ENCODE measurements at regions of chr13 and their contacts with region 1.

Region 1: DNA sequence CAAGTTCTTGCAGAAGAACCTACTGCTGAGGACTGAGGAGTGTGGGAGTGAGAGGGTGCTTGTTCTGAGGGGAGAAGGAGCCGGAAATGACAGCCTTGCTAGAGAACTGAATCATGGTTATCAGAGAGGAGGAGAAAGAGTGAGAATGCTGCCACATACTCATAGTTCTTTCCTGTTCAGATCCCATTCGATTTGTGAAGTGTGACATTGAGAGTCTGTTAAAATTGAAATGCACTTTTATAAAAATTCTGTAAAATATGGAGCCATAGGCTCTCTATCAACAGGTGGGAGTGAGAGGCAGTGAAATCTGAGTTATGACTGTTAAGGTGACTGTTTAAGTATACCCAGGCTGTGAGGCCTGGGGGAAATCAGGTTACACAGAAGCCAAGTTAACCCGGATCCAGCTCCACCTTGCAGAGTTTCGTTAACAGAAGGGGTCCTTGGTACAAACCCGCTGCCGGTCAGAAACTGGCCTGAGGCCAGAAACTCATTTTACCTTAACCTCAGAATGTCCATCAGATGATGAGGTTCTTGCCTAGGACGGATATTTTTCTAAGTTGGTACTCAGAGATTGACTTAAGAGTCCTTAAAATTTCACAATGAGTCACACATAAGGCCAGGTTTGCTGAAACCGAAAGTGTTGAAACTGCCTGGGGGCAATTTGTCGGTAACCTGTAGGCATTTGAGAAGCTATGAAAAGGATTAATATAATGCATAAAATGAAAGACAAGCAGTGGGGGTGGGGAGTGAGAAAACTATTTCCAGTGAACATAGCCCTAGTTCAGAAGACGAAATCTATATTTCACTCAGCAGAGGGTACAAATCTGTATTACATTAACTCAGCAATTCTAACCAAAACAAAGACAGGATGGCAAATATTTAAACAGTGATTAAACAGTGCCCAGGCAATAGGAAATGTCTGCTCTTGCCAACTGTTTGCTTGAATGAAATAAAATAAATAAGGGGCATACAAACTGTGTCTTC is 350.5 kb downstream of the KCNRG start:
- DNase-seq: peak; percentile 75
- ATAC-seq: peak; percentile 64
- H3K4me3 Mint-ChIP-seq: peak overlapping the region; percentile 13
- H3K27ac Mint-ChIP-seq: peak overlapping the region; percentile 71
- H3K4me1 Mint-ChIP-seq: peaks cover 43% of the 10 kb centered on the region
- H3K27me3 Mint-ChIP-seq: peaks cover 32% of the 10 kb centered on the region

Region 2: DNA sequence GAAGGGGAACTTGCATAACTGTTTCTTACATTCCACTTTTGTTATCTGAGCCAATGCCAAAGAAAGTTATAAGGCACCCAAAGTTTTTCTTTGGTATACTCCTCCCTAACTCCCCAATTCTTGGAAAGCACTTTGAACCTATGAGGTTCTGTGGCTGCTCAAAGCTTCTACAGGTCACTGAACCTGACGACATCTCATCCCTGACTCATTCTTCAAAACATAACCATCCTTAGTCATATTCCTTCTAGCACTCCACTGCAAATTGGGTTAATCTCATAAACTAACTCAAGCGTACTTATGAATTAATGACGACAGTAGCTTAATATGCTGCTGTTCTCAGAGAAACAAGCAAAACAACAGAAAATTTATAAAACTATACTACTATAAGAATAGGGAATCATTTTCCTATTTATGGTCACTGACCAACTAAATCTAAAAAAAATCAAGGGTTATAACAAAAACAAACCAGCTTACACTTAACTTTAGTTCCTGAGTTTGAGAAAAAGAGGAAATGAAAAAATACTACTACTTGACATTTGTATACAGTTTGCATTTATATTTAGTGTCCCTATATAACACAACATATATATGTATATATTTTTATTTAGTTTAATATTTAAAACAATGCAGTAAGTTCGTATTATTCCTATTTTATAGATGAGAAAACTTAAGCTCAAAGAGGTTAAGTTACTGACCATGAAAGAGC is 991.0 kb before region 1 on chr13:
- CTCF ChIA-PET with region 1: no interaction called
- POLR2A ChIA-PET with region 1: no interaction called
- intact Hi-C with region 1: no loop called
- DNase-seq: no peak
- ATAC-seq: no peak
- H3K4me3 Mint-ChIP-seq: no peak overlapping the region
- H3K27ac Mint-ChIP-seq: no peak overlapping the region
- H3K4me1 Mint-ChIP-seq: peaks cover 21% of the 10 kb centered on the region
- H3K27me3 Mint-ChIP-seq: peaks cover 3% of the 10 kb centered on the region

Region 3: DNA sequence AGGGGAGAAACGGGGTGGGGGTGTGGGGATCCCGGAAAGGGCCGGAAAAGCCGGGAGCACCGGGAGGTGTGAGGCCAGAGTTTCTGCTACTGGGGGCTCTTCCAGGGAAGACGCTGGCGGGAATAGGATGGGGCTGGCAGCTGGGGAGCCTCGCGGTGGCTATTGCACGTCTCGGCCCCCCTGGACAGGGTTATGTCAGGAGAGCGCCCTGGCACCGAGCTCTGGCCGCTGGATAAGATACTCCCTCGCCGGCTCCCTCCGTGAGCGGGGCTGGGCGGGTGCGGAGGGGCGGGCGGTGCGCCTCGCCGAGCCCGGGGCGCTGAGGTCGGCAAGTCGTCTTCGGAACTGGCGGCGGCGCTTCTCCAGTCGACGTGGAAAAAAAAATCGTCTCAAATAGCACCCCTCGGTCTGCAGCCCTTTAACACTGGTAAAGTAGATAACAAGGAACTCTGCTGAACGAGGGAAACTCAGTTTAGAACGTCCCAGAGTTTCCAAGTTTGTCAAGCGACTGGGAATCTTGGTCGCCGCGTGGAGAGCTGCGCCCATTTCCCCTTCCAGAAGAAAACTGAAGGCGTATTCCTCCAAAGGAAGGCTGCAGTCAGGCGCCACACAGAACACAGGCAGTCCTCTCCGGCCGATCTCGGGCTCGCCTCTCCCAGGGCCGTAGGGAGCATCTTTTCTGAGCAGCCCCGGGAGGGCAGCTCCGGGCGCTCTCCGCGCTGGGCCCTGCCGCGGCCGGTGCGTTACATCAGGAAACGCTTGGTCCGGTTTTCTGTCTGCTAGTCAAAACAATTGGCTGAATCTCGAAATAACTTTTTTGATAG is 235.4 kb before region 1 on chr13:
- CTCF ChIA-PET with region 1: interaction called, 3 read pairs
- POLR2A ChIA-PET with region 1: interaction called, 4 read pairs
- intact Hi-C with region 1: loop called (anchors 2 to 5 kb)
- DNase-seq: peak; percentile 52
- ATAC-seq: no peak
- H3K4me3 Mint-ChIP-seq: peak overlapping the region; percentile 67
- H3K27ac Mint-ChIP-seq: no peak overlapping the region
- H3K4me1 Mint-ChIP-seq: peaks cover 60% of the 10 kb centered on the region
- H3K27me3 Mint-ChIP-seq: peaks cover 63% of the 10 kb centered on the region

Region 4: GRCh38 chr13:50167224-50167947 is 198.3 kb before region 1 on chr13:
- CTCF ChIA-PET with region 1: no interaction called
- POLR2A ChIA-PET with region 1: no interaction called
- intact Hi-C with region 1: loop called (anchors 2 kb)
- DNase-seq: peak; percentile 24
- ATAC-seq: peak; percentile 91
- H3K4me3 Mint-ChIP-seq: no peak overlapping the region
- H3K27ac Mint-ChIP-seq: no peak overlapping the region
- H3K4me1 Mint-ChIP-seq: peaks cover 14% of the 10 kb centered on the region
- H3K27me3 Mint-ChIP-seq: peaks cover 16% of the 10 kb centered on the region

Region 5: GRCh38 chr13:50236898-50237318 is 128.8 kb before region 1 on chr13:
- CTCF ChIA-PET with region 1: no interaction called
- POLR2A ChIA-PET with region 1: no interaction called
- intact Hi-C with region 1: loop called (anchors 1 to 2 kb)
- DNase-seq: peak; percentile 60
- ATAC-seq: peak; percentile 92
- H3K4me3 Mint-ChIP-seq: peak overlapping the region; percentile 47
- H3K27ac Mint-ChIP-seq: peak overlapping the region; percentile 74
- H3K4me1 Mint-ChIP-seq: peaks cover 47% of the 10 kb centered on the region
- H3K27me3 Mint-ChIP-seq: peaks cover 18% of the 10 kb centered on the region

Region 6: GRCh38 chr13:50299546-50300249 is 66.0 kb before region 1 on chr13:
- CTCF ChIA-PET with region 1: no interaction called
- POLR2A ChIA-PET with region 1: no interaction called
- intact Hi-C with region 1: no loop called
- DNase-seq: no peak
- ATAC-seq: no peak
- H3K4me3 Mint-ChIP-seq: no peak overlapping the region
- H3K27ac Mint-ChIP-seq: no peak overlapping the region
- H3K4me1 Mint-ChIP-seq: no peaks in the 10 kb centered on the region
- H3K27me3 Mint-ChIP-seq: peaks cover 6% of the 10 kb centered on the region

Region 7: DNA sequence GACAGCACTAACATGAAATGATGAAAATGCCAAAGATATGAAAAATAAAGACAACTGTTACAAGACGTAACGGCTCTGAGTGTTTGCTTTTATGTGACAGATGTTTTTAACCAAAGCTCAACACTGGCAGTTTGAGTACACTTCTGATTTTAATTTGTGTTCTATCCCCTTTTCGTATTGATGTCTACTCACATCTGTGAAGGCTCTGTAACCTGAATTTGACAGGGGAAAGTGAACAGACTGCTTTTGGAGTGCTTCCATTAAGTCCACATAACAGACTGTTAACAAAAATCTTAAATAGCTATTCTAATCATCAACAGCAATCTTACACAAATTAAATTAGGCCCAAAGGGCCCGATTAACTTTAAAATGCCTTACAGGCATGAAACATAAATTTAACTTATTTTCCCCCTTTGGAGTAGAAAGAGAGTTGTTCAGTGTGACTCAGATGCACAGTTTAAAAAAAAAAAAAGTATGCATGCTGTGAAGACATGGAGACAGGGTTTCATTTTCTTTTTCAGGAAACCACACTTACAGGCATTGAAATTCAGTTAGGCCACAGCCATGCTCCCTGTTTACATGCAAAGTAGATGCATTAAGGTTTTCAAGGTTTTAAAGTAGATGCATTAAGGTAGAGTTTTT is 527.6 kb after region 1 on chr13:
- CTCF ChIA-PET with region 1: no interaction called
- POLR2A ChIA-PET with region 1: no interaction called
- intact Hi-C with region 1: loop called (anchors 1 kb)
- DNase-seq: peak; percentile 37
- ATAC-seq: peak; percentile 94
- H3K4me3 Mint-ChIP-seq: peak overlapping the region; percentile 50
- H3K27ac Mint-ChIP-seq: peak overlapping the region; percentile 89
- H3K4me1 Mint-ChIP-seq: peaks cover 40% of the 10 kb centered on the region
- H3K27me3 Mint-ChIP-seq: no peaks in the 10 kb centered on the region

Region 8: DNA sequence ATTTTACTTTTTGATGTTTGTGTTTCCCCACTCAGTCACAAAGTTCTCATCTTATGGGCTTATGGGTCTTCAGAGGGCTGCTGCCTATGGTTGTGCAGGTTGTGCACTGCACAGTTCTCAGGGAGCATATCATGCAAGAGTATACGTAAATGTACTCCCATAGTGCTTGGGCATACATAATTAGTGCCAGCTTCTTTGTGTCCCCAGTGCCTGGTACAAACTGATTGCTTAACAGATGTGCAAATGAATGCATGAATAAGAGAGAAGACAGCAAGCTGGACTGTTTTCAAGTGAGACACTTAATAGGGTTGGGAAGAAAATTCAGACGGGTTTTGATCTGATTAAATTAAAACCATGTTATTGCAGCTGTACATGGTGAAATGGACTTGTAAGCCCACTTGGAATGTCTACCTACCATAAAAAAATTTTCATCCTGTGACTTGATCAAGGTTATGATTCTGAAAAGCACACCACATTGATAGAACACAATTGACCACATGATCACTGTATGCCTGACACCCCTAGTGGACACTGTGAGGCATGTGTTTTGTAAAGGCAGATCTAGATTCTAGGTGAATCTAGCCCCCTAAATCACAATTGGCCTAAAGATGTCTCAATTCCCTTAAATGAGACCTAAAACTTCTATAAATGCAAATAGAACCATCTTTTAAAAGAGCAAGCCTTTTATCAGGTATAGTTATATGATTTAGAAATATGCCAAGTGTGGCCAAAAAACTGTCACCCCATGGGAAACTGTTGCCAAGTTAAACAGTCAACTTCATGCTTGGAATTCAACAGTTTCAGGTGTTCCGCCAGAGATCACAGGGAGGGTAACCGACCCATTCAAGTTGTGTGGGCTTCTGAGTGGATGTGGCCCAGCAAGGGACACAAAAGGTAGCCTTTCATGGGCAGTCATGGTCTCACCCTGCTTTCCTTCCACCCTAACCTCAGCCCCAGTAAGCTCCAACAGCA is 884.4 kb after region 1 on chr13:
- CTCF ChIA-PET with region 1: no interaction called
- POLR2A ChIA-PET with region 1: no interaction called
- intact Hi-C with region 1: no loop called
- DNase-seq: no peak
- ATAC-seq: no peak
- H3K4me3 Mint-ChIP-seq: no peak overlapping the region
- H3K27ac Mint-ChIP-seq: no peak overlapping the region
- H3K4me1 Mint-ChIP-seq: no peaks in the 10 kb centered on the region
- H3K27me3 Mint-ChIP-seq: no peaks in the 10 kb centered on the region

Measured in activated CD4-positive, alpha-beta T cell treated with anti-CD3 and anti-CD28 coated beads for 36 hours (primary cell).